Calu3 (cell line): ENCODE measurements at regions of chr3 and their contacts with region 1.

Region 1: GRCh38 chr3:67357610-67358458 is 296.6 kb downstream of the SUCLG2 start:
- DNase-seq: peak; percentile 40
- H3K4me3 Mint-ChIP-seq: no peak overlapping the region
- H3K27ac Mint-ChIP-seq: no peak overlapping the region
- H3K4me1 Mint-ChIP-seq: peaks cover 33% of the 10 kb centered on the region
- H3K27me3 Mint-ChIP-seq: no peaks in the 10 kb centered on the region
- CTCF ChIP-seq: peak; percentile 47

Region 2: DNA sequence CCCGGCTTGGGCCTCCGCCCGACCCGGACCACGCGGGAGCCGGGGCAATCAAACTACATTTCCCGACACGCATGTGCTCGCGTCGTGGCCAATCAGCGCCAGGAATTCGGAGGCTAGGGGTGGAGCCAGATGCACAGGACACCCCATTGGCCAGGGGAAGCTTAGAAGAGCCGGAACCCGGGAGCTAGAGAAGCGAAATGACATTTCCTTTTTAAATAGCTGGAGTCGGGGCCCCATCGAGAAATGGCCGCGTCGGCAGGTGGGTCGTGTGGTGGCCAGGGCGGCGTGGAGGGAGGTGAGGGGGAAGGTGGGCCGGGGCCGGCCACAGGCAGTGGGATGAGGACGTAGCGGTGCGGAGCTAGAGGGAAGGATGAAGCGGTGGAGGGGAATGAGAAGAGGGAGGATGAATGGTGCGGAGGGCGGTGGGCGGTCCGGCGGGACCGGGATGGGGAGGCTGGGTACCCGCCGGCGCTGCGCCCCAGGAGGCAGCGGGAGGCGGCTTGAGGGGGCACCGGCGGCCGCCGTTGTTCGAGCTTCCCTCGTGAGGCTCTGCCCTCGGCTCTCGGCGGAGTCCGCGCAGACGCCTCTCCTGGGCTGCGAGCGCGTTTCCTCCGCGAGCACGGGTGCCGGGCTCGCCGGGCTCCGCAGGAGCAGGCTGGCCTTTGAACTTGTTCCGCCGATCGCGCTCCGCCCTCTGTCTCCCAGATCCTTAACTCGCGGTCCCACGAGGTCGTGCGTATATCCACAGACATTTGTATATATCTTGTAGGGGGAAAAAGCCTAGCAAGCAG is 359.5 kb before region 1 on chr3 and contains the start of gene KBTBD8:
- CTCF ChIA-PET with region 1: no interaction called
- intact Hi-C with region 1: loop called (anchors 10 kb)
- DNase-seq: peak; percentile 98
- H3K4me3 Mint-ChIP-seq: peak within 1 kb of the TSS; percentile 81
- H3K27ac Mint-ChIP-seq: peak within 1 kb of the TSS; percentile 62
- H3K4me1 Mint-ChIP-seq: no peaks in the 10 kb centered on the region
- H3K27me3 Mint-ChIP-seq: peaks cover 14% of the 10 kb centered on the region
- CTCF ChIP-seq: no peak
- total RNA-seq, gene KBTBD8: 4.1 and 5.9 TPM in 2 replicates